Thyroid gland (tissue), 4 donors: ENCODE measurements at regions of chr19 and their contacts with region 1.

Region 1: DNA sequence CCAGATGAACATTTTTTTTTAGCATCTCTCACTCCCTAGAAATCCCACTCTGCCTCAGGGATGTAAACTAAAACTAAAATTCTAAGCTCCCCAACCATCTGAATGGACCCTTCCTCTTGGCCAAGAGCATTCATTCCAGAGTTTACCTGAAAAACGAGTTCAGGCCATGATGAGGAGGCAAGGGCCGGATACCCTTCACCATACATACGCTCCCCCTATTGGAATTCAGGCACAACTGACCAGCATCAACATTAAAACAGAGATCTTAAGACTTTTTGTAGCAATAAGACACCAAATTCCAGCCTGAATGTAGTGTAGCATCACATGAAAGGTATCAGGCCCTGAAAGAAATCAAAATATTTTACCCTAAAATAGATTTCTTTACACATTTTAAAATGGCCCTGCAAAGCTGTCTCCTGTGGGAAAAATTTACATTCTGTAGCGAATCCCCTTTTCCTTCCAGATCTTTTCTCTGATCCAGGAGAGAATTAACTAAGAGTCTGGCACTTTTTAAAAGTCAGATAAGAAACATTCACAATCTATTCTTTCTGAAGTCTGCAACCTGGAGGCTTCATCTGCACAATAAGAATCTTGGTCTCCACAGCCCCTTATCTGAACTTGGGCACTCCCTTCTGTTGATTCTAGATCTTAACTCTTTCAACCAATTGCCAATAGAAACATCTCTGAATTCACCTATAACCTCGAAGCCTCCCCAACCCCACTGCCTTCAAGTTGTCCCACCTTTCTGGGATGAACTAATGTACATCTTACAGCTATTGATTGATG is 888.5 kb downstream of the UQCRFS1 start:
- DNase-seq: no peak
- H3K4me3 ChIP-seq: no peak overlapping the region
- H3K27ac ChIP-seq: no peak overlapping the region
- H3K4me1 ChIP-seq: no peaks in the 10 kb centered on the region
- H3K27me3 ChIP-seq: no peaks in the 10 kb centered on the region
- CTCF ChIP-seq: no peak
- POLR2A ChIP-seq: no peak

Region 2: GRCh38 chr19:27966390-27966816 is 358.1 kb before region 1 on chr19:
- intact Hi-C with region 1: loop called (anchors 10 kb)
- DNase-seq: no peak
- H3K4me3 ChIP-seq: no peak overlapping the region
- H3K27ac ChIP-seq: no peak overlapping the region
- H3K4me1 ChIP-seq: no peaks in the 10 kb centered on the region
- H3K27me3 ChIP-seq: no peaks in the 10 kb centered on the region
- CTCF ChIP-seq: peak in 3 of 6 experiments; percentile 18 to 69 (median 42)
- POLR2A ChIP-seq: no peak

Region 3: DNA sequence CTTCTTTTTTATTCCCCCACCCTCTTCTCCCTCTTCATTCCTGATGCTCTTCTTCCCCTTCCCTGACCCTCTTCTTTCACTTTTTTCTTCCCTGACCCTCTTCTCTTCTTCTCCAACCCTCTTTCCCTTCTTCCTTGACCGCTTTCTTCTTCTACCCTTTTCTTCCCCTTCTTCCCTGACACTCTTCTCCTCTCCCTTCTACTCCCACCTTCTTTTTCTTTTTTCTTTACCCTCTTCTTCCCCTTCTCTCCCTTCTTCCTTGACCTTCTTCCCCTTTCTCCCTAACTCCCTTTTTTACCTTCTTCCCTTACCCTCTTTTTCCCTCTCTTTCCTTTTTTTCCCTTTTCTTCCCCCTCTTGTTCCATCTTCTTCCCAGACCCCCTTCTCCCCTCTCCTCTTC is 42.8 kb before region 1 on chr19:
- intact Hi-C with region 1: no loop called
- DNase-seq: no peak
- H3K4me3 ChIP-seq: no peak overlapping the region
- H3K27ac ChIP-seq: no peak overlapping the region
- H3K4me1 ChIP-seq: no peaks in the 10 kb centered on the region
- H3K27me3 ChIP-seq: no peaks in the 10 kb centered on the region
- CTCF ChIP-seq: no peak
- POLR2A ChIP-seq: no peak